Stomach (tissue), 19 donors: ENCODE measurements at regions of chr17 and their contacts with region 1.

Region 1: GRCh38 chr17:48024937-48025906 is 12.4 kb downstream of the COPZ2 start:
- DNase-seq: peak; percentile 98
- H3K4me3 ChIP-seq: peak overlapping the region; percentile 47 to 57 (median 49)
- H3K27ac ChIP-seq: peak overlapping the region; percentile 28 to 87 (median 79)
- H3K4me1 ChIP-seq: peaks cover 34 to 53% (median 46%) of the 10 kb centered on the region in 4 donors
- H3K27me3 ChIP-seq: peaks cover 0 to 22% (median 11%) of the 10 kb centered on the region in 3 donors
- CTCF ChIP-seq: peak in 5 of 7 experiments; percentile 74 to 97 (median 85)
- EP300 ChIP-seq: no peak
- POLR2A ChIP-seq: no peak

Region 2: GRCh38 chr17:48074315-48075081 is 49.3 kb after region 1 on chr17:
- intact Hi-C with region 1: loop called (anchors 5 kb)
- DNase-seq: peak; percentile 83 to 90
- H3K4me3 ChIP-seq: no peak overlapping the region
- H3K27ac ChIP-seq: no peak overlapping the region
- H3K4me1 ChIP-seq: no peaks in the 10 kb centered on the region
- H3K27me3 ChIP-seq: no peaks in the 10 kb centered on the region
- CTCF ChIP-seq: peak in 5 of 7 experiments; percentile 57 to 87 (median 73)
- EP300 ChIP-seq: no peak
- POLR2A ChIP-seq: no peak

Region 3: DNA sequence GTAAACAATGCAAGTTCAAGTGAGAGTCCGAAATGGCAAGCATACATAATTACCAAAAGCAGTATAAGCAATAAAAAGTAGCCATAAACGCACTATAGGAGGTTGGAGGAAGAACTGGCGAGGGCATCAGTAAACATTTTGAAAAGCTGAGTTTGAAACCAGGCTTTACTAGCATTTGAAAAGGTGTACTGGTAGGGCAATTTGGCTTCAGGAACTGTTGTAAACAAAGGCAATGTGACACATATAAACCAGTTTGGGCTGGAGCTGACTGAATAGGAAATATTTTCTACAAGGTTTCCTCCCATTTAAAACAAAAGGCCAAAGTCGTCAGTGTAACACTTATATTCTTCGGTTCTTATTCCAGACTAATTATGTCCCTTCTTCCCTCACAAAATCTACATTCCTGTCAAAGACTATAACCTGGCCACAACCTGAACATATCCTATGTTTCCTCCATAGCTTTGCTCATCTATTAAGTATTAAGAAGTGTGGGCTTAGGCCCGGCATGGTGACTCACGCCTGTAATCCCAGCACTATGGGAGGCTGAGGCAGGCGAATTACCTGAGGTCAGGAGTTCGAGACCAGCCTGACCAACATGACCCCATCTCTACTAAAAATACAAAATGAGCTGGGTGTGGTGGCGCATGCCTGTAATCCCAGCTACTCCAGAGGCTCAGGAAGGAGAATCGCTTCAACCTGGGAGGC is 68.3 kb after region 1 on chr17:
- intact Hi-C with region 1: no loop called
- DNase-seq: no peak
- H3K4me3 ChIP-seq: no peak overlapping the region
- H3K27ac ChIP-seq: no peak overlapping the region
- H3K4me1 ChIP-seq: peaks cover 0 to 32% (median 10%) of the 10 kb centered on the region in 4 donors
- H3K27me3 ChIP-seq: no peaks in the 10 kb centered on the region
- CTCF ChIP-seq: no peak
- EP300 ChIP-seq: no peak
- POLR2A ChIP-seq: no peak

Region 4: GRCh38 chr17:48127356-48128051 is 102.3 kb after region 1 on chr17:
- intact Hi-C with region 1: loop called (anchors 5 kb)
- DNase-seq: no peak
- H3K4me3 ChIP-seq: no peak overlapping the region
- H3K27ac ChIP-seq: no peak overlapping the region
- H3K4me1 ChIP-seq: no peaks in the 10 kb centered on the region
- H3K27me3 ChIP-seq: no peaks in the 10 kb centered on the region
- CTCF ChIP-seq: no peak
- EP300 ChIP-seq: no peak
- POLR2A ChIP-seq: no peak